Panc1 (cell line): ENCODE measurements at regions of chr5 and their contacts with region 1.

Region 1: DNA sequence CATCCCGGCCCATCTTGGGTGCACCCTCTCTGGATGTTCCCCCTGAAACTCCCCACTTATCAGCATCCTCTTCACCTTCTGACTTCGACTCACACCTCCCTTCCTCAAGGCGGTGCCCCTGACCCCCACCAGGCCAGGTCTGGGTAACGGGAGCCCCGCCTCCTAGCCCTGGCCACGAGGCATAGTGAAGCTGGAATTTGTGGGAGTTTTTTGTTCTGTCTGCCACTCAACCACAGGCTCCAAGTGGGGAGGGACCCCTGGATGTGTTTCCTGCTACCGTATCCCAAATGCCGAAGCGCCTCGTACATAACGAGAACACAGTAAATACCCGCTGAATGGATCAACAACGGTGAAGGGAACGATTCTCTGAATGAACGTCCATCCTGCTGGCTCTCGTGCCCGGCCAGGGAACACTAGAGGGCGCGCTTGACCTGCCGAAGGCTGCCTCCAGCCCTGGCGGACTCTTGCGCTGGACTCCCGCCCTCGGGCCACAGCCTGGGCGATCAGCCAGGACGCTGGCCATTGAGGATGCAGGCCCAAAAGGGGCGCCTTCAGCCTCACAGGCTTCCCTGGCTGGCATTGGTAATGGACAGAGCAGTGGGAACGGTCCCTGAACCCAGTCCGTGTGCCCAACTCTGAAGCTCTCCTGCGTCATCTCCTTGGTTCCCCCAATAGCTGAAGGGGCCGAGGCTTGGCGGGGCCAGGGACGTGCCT is 47.3 kb upstream of the PHYKPL start:
- DNase-seq: peak; percentile 41
- ATAC-seq: peak; percentile 94
- H3K4me3 ChIP-seq: no peak overlapping the region
- H3K27ac ChIP-seq: no peak overlapping the region
- H3K4me1 ChIP-seq: peaks cover 8% of the 10 kb centered on the region
- H3K27me3 ChIP-seq: peaks cover 4% of the 10 kb centered on the region
- CTCF ChIP-seq: peak; percentile 95

Region 2: GRCh38 chr5:178120868-178121357 is 159.0 kb before region 1 on chr5:
- CTCF ChIA-PET with region 1: no interaction called
- POLR2A ChIA-PET with region 1: no interaction called
- in situ Hi-C with region 1: no loop called
- intact Hi-C with region 1: no loop called
- DNase-seq: no peak
- ATAC-seq: peak; percentile 77
- H3K4me3 ChIP-seq: no peak overlapping the region
- H3K27ac ChIP-seq: no peak overlapping the region
- H3K4me1 ChIP-seq: peaks cover 6% of the 10 kb centered on the region; the same call in 1 of the 2 replicates
- H3K27me3 ChIP-seq: no peaks in the 10 kb centered on the region
- CTCF ChIP-seq: peak; percentile 79; the same call in 1 of the 2 replicates

Region 3: DNA sequence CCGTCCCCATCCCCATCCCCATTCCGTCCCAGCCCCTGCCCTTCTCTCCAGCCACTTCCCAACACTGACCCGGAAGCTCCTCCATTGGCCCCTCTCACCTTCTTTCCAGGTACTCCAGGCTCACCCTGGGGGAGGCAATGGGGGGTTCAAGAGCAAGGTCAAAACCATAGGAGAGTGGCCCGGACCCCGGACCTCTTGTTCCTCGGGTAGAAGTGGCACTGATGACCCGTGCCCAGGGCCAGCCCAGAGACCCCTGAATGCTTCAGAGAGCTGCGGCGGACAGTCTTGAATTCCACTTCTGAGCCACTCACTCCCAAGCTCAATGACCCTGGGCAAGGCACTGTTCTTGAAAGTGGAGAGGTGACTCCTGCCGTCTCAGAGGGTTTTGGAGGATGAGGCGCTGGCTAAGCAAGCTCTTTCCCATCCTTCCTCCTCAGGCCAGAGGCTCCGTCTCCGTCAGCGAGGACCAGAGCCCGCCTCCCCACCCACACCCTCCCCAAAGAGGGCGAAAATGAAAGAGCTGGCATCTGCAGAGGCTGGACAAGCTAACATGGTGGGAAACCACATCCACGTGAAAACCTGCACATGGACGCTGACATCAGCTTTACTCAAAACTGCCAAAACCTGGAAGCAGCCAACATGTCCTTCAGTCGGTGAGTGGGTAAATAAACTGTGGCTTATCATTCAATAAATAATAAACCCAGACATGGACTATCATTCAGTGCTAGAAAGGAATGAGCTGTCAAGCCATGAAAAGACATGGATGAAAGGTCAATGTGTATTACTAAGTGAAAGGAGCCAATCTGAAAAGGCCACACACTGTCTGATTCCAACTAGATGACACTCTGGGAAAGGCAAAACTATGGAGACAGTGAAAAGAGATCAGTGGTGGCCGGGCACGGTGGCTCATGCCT is 20.0 kb before region 1 on chr5:
- CTCF ChIA-PET with region 1: no interaction called
- POLR2A ChIA-PET with region 1: no interaction called
- in situ Hi-C with region 1: no loop called
- intact Hi-C with region 1: no loop called
- DNase-seq: no peak
- ATAC-seq: no peak
- H3K4me3 ChIP-seq: no peak overlapping the region
- H3K27ac ChIP-seq: no peak overlapping the region
- H3K4me1 ChIP-seq: no peaks in the 10 kb centered on the region
- H3K27me3 ChIP-seq: no peaks in the 10 kb centered on the region
- CTCF ChIP-seq: no peak

Region 4: GRCh38 chr5:178301641-178302040 is 21.8 kb after region 1 on chr5:
- CTCF ChIA-PET with region 1: interaction called, 11 read pairs
- POLR2A ChIA-PET with region 1: interaction called, 3 read pairs
- in situ Hi-C with region 1: no loop called
- intact Hi-C with region 1: no loop called
- DNase-seq: no peak
- ATAC-seq: no peak
- H3K4me3 ChIP-seq: no peak overlapping the region
- H3K27ac ChIP-seq: no peak overlapping the region
- H3K4me1 ChIP-seq: no peaks in the 10 kb centered on the region
- H3K27me3 ChIP-seq: peaks cover 8% of the 10 kb centered on the region
- CTCF ChIP-seq: no peak

Region 5: DNA sequence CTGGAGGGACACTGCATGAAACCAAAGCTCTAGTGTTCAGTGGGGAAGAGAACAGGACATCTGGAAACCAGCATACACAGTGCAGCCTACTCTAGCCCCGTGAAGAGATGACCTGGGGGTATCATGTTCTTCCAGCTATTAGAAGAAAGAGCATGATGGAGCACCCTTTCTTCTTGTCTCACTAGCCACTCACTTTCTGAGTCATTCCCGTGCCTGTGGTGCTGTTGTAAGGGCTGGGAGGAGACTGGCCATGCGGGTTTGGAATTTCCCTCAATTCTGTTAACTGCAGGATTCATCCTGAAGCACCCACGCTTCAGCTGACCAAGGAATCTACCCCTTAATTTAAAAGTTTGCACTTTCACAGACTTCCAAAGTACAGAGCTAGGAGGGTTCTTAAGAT is 173.3 kb after region 1 on chr5:
- CTCF ChIA-PET with region 1: no interaction called
- POLR2A ChIA-PET with region 1: no interaction called
- in situ Hi-C with region 1: no loop called
- intact Hi-C with region 1: loop called (anchors 10 kb)
- DNase-seq: no peak
- ATAC-seq: peak; percentile 75
- H3K4me3 ChIP-seq: no peak overlapping the region
- H3K27ac ChIP-seq: no peak overlapping the region
- H3K4me1 ChIP-seq: no peaks in the 10 kb centered on the region; the same call in 1 of the 2 replicates
- H3K27me3 ChIP-seq: peaks cover 2% of the 10 kb centered on the region; the same call in 1 of the 2 replicates
- CTCF ChIP-seq: no peak

Region 6: GRCh38 chr5:178555771-178556211 is 275.9 kb after region 1 on chr5:
- CTCF ChIA-PET with region 1: no interaction called
- POLR2A ChIA-PET with region 1: no interaction called
- in situ Hi-C with region 1: no loop called
- intact Hi-C with region 1: loop called (anchors 2 kb)
- DNase-seq: no peak
- ATAC-seq: no peak
- H3K4me3 ChIP-seq: no peak overlapping the region
- H3K27ac ChIP-seq: no peak overlapping the region
- H3K4me1 ChIP-seq: no peaks in the 10 kb centered on the region
- H3K27me3 ChIP-seq: peaks cover 2% of the 10 kb centered on the region; the same call in 1 of the 2 replicates
- CTCF ChIP-seq: no peak

Region 7: GRCh38 chr5:178590141-178590923 is 310.4 kb after region 1 on chr5 and contains the start of gene COL23A1:
- CTCF ChIA-PET with region 1: interaction called, 5 read pairs
- POLR2A ChIA-PET with region 1: interaction called, 7 read pairs
- in situ Hi-C with region 1: no loop called
- intact Hi-C with region 1: loop called (anchors 5 kb)
- DNase-seq: peak; percentile 15
- ATAC-seq: peak; percentile 67
- H3K4me3 ChIP-seq: peak within 1 kb of the TSS; percentile 32 to 37
- H3K27ac ChIP-seq: no peak within 1 kb of the TSS
- H3K4me1 ChIP-seq: peaks cover 6% of the 10 kb centered on the region; the same call in 1 of the 2 replicates
- H3K27me3 ChIP-seq: peaks cover 12% of the 10 kb centered on the region
- CTCF ChIP-seq: peak; percentile 95
- total RNA-seq, gene COL23A1: 0.05 TPM